CD8-positive, alpha-beta T cell (primary cell): ENCODE measurements at regions of chr1 and their contacts with region 1.

Region 1: GRCh38 chr1:161292631-161293030 is 17.1 kb downstream of the MPZ start:
- DNase-seq: no peak
- ATAC-seq: no peak
- H3K4me3 ChIP-seq: no peak overlapping the region
- H3K4me3 Mint-ChIP-seq: no peak overlapping the region
- H3K27ac ChIP-seq: no peak overlapping the region
- H3K27ac Mint-ChIP-seq: no peak overlapping the region
- H3K4me1 ChIP-seq: no peaks in the 10 kb centered on the region
- H3K4me1 Mint-ChIP-seq: no peaks in the 10 kb centered on the region
- H3K27me3 ChIP-seq: no peaks in the 10 kb centered on the region
- H3K27me3 Mint-ChIP-seq: no peaks in the 10 kb centered on the region
- CTCF ChIP-seq: no peak

Region 2: DNA sequence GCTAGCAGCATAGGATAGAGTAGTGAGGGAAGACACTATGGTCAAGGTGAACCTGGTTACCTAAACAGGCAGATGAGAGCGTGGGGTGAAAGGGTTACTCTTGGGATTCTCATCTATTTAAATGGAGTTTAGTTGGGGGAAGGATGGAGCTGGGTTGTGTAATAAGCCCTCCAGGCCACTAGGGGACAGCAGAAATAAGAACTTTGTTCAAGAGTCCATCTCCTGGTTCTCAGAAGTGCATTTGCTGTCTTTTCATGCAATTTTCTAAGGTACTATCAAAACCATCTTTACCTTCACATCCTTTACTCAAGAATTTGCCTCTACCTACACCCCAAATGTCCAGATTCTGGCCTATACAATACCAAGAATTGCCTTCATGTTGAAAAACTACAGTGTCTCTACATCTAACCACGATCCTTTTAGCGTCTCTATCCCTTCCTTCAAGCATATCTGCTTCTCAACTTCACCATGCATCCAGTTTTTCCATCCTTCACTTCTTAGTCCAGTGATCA is 673.8 kb before region 1 on chr1:
- CTCF ChIA-PET with region 1: no interaction called
- POLR2A ChIA-PET with region 1: no interaction called
- intact Hi-C with region 1: no loop called
- DNase-seq: peak in 5 of 9 experiments; percentile 39 to 74 (median 43)
- ATAC-seq: peak; percentile 69
- H3K4me3 ChIP-seq: no peak overlapping the region
- H3K4me3 Mint-ChIP-seq: no peak overlapping the region
- H3K27ac ChIP-seq: no peak overlapping the region
- H3K27ac Mint-ChIP-seq: peak overlapping the region; percentile 49
- H3K4me1 ChIP-seq: peaks cover 13% of the 10 kb centered on the region
- H3K4me1 Mint-ChIP-seq: peaks cover 51% of the 10 kb centered on the region
- H3K27me3 ChIP-seq: no peaks in the 10 kb centered on the region
- H3K27me3 Mint-ChIP-seq: no peaks in the 10 kb centered on the region
- CTCF ChIP-seq: peak; percentile 77

Region 3: DNA sequence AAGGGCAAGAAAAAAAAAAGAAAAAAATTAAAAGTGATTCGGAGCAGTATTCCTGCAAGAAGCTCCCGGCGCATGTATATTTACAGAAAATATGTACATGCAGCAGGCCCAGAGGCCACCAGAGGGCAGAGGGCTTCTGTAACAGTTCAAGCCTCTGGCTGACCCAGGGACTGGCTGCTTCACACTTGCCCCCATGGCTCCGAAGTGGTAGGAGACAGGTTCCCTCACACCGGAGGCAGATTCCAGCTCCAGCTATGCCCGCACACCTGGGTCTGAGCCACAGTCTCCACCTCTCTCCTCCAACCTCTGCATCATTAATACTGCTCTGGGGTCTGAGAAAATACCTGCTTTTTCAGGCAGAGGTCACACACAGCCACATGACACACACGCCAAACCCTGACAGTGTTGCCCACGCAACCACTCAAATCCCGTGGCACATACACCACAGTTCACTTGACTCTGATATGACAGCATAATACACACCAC is 220.7 kb before region 1 on chr1:
- CTCF ChIA-PET with region 1: no interaction called
- POLR2A ChIA-PET with region 1: no interaction called
- intact Hi-C with region 1: no loop called
- DNase-seq: peak; percentile 19 to 75 (median 54)
- ATAC-seq: no peak
- H3K4me3 ChIP-seq: no peak overlapping the region
- H3K4me3 Mint-ChIP-seq: no peak overlapping the region
- H3K27ac ChIP-seq: no peak overlapping the region
- H3K27ac Mint-ChIP-seq: peak overlapping the region; percentile 83
- H3K4me1 ChIP-seq: peaks cover 31% of the 10 kb centered on the region
- H3K4me1 Mint-ChIP-seq: peaks cover 40% of the 10 kb centered on the region
- H3K27me3 ChIP-seq: no peaks in the 10 kb centered on the region
- H3K27me3 Mint-ChIP-seq: no peaks in the 10 kb centered on the region
- CTCF ChIP-seq: peak; percentile 70

Region 4: DNA sequence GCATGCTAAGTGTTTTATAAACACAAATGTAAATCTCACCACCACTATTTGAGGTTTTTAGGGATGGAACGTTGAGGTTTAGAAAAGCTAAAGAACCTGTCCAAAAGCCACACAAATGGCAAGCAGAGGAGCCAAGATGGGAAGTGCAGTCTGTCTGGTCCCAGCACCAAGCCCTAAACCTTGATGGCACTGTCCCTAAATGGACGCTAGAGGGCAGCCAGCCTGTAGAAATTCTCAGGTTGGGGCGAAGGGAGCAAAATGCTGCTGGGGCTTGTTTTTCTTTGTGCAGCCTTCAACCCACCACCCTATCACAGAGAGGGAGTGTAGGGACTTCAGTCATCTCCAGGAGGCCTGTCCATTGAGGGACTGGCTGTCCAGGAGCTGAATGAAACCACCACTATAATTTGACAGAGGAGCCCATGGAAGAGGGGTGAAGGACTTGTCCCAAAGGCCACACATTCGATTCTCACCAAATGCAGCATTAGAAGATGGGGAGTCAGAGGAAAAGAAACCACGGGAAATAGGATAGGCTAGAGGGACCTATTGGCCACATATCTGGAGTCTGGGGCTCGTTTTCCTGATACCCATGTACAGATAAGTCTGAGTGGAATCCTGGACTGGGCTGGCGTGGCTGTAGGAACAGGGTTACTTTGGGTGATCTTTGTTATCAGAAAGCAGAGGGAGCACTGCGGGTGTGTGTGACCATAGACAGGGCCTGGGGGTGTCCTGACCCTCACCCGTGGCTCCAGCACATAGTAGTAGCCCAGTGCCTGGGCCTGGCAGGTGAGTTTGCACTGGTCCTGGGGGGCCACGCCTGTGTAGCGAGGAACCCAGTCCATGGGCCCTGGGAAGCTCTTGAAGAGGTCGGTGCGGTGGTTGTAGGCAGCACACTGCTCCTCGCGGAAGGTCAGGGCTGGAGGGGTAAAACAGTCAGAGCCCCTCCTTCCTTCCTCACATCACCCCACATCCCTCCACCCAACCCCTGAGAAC is 99.9 kb before region 1 on chr1:
- CTCF ChIA-PET with region 1: interaction called, 13 read pairs
- POLR2A ChIA-PET with region 1: interaction called, 3 read pairs
- intact Hi-C with region 1: loop called in 1 of 2 experiments (anchors 1 kb)
- DNase-seq: peak; percentile 39 to 85 (median 70)
- ATAC-seq: peak; percentile 98
- H3K4me3 ChIP-seq: no peak overlapping the region
- H3K4me3 Mint-ChIP-seq: no peak overlapping the region
- H3K27ac ChIP-seq: peak overlapping the region in 1 of 2 experiments; percentile 41
- H3K27ac Mint-ChIP-seq: peak overlapping the region; percentile 70
- H3K4me1 ChIP-seq: peaks cover 37% of the 10 kb centered on the region
- H3K4me1 Mint-ChIP-seq: peaks cover 40% of the 10 kb centered on the region
- H3K27me3 ChIP-seq: no peaks in the 10 kb centered on the region
- H3K27me3 Mint-ChIP-seq: no peaks in the 10 kb centered on the region
- CTCF ChIP-seq: peak; percentile 75

Region 5: GRCh38 chr1:161209790-161210409 is 82.7 kb before region 1 on chr1:
- CTCF ChIA-PET with region 1: interaction called, 19 read pairs
- POLR2A ChIA-PET with region 1: no interaction called
- intact Hi-C with region 1: loop called in 1 of 2 experiments (anchors 1 kb)
- DNase-seq: peak; percentile 48 to 85 (median 74)
- ATAC-seq: peak; percentile 99
- H3K4me3 ChIP-seq: no peak overlapping the region
- H3K4me3 Mint-ChIP-seq: no peak overlapping the region
- H3K27ac ChIP-seq: peak overlapping the region in 1 of 2 experiments; percentile 11
- H3K27ac Mint-ChIP-seq: peak overlapping the region; percentile 50
- H3K4me1 ChIP-seq: peaks cover 20% of the 10 kb centered on the region
- H3K4me1 Mint-ChIP-seq: peaks cover 37% of the 10 kb centered on the region
- H3K27me3 ChIP-seq: no peaks in the 10 kb centered on the region
- H3K27me3 Mint-ChIP-seq: no peaks in the 10 kb centered on the region
- CTCF ChIP-seq: peak; percentile 60

Region 6: GRCh38 chr1:161305867-161306519 is 13.4 kb after region 1 on chr1:
- CTCF ChIA-PET with region 1: interaction called, 10 read pairs
- POLR2A ChIA-PET with region 1: interaction called, 5 read pairs
- intact Hi-C with region 1: loop called in 1 of 2 experiments (anchors 2 kb)
- DNase-seq: peak; percentile 73 to 95 (median 89)
- ATAC-seq: peak; percentile 98
- H3K4me3 ChIP-seq: peak overlapping the region; percentile 74 to 93
- H3K4me3 Mint-ChIP-seq: peak overlapping the region; percentile 97
- H3K27ac ChIP-seq: peak overlapping the region; percentile 70 to 71
- H3K27ac Mint-ChIP-seq: peak overlapping the region; percentile 93
- H3K4me1 ChIP-seq: peaks cover 31% of the 10 kb centered on the region
- H3K4me1 Mint-ChIP-seq: peaks cover 40% of the 10 kb centered on the region
- H3K27me3 ChIP-seq: no peaks in the 10 kb centered on the region
- H3K27me3 Mint-ChIP-seq: no peaks in the 10 kb centered on the region
- CTCF ChIP-seq: peak; percentile 54

Region 7: DNA sequence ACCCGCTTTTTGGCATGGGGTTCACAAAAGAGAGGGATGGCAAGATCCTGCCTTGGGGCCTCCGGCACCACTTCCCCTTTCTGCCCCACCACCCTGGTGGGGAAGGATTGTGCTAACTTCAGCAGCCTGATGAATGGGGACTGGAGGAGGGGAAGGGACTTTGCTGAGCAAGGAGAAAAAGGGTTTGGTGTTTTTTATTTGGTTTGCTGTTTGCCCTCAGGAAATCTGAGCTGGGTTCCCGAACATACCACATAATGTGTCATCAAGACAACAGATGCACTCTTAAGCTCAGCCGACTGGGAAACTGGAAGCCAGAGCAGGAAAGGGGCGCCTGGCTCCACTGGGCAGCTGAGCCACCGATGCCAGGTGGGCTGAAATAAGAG is 711.2 kb after region 1 on chr1:
- CTCF ChIA-PET with region 1: no interaction called
- POLR2A ChIA-PET with region 1: no interaction called
- intact Hi-C with region 1: no loop called
- DNase-seq: no peak
- ATAC-seq: no peak
- H3K4me3 ChIP-seq: no peak overlapping the region
- H3K4me3 Mint-ChIP-seq: no peak overlapping the region
- H3K27ac ChIP-seq: no peak overlapping the region
- H3K27ac Mint-ChIP-seq: no peak overlapping the region
- H3K4me1 ChIP-seq: no peaks in the 10 kb centered on the region
- H3K4me1 Mint-ChIP-seq: peaks cover 2% of the 10 kb centered on the region
- H3K27me3 ChIP-seq: no peaks in the 10 kb centered on the region
- H3K27me3 Mint-ChIP-seq: peaks cover 7% of the 10 kb centered on the region
- CTCF ChIP-seq: no peak